ENCODE measurements at regions of chr5 and their contacts with region 1.

Region 1: GRCh38 chr5:177516604-177517568 is at the start of gene DDX41:
- DNase-seq: peak; percentile 99
- H3K4me3 Mint-ChIP-seq: peak within 1 kb of the TSS; percentile 91
- H3K27ac Mint-ChIP-seq: peak within 1 kb of the TSS; percentile 92
- H3K4me1 Mint-ChIP-seq: peaks cover 32% of the 10 kb centered on the region
- H3K27me3 Mint-ChIP-seq: no peaks in the 10 kb centered on the region
- total RNA-seq, gene DDX41: 157 and 172 TPM in 2 replicates

Region 2: GRCh38 chr5:177133091-177133852 is 383.6 kb before region 1 on chr5 and contains the start of gene NSD1:
- intact Hi-C with region 1: loop called (anchors 5 kb)
- DNase-seq: peak; percentile 97
- H3K4me3 Mint-ChIP-seq: peak within 1 kb of the TSS; percentile 95
- H3K27ac Mint-ChIP-seq: peak within 1 kb of the TSS; percentile 92
- H3K4me1 Mint-ChIP-seq: peaks cover 46% of the 10 kb centered on the region
- H3K27me3 Mint-ChIP-seq: no peaks in the 10 kb centered on the region
- total RNA-seq, gene NSD1: 103 and 108 TPM in 2 replicates

Region 3: DNA sequence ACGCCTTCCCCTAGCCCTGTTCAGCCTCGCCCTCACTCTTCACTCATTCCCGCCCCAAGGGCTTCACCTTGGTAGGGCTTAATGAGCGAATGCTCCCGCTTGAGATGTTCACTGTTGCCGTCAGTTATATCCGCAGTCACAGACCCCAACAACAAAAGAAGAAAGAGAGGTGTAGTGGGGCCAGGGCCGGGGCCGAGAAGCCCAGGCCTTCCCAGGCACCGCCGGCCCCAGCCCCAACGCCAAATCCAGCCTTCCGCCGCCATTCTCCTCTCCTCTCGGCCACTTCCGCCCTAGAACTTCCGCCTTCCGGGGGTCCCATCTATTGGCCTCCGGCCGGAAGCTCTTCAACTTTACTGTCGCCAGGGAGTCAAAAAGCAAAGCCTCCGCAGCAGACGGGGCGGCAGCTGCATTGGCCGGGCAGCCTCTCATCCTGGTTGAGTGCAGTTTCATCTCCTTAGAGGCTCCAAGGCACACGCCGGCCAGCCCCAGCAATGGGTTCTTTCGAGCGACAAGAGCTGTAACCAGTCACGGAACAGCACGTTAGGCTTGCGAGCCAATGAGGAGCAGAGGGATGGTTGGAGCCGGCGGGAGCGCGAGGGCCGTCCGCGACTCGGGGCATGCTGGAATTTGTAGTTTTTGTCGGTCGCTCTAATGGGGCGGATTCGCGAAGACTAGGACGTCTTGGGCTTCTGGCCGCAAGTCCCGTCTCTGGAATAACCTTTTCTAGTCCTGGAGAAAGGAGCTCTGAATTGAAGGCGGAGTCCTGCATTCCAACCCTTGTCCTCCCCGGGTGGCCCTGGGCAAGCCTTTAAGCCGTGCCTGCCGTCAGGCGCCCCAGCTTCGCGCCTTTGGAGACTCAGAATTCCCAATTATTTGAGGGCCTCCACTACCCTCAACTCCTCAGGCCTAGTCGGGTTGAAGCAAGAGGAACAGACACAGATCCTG is 165.2 kb before region 1 on chr5 and contains the start of gene LMAN2:
- intact Hi-C with region 1: loop called (anchors 1 kb)
- DNase-seq: peak; percentile 97
- H3K4me3 Mint-ChIP-seq: peak within 1 kb of the TSS; percentile 90
- H3K27ac Mint-ChIP-seq: peak within 1 kb of the TSS; percentile 100
- H3K4me1 Mint-ChIP-seq: peaks cover 48% of the 10 kb centered on the region
- H3K27me3 Mint-ChIP-seq: no peaks in the 10 kb centered on the region
- total RNA-seq, gene LMAN2: 105 and 108 TPM in 2 replicates

Region 4: GRCh38 chr5:177554474-177555111 is 37.7 kb after region 1 on chr5 and contains the start of gene FAM193B:
- intact Hi-C with region 1: loop called (anchors 5 kb)
- DNase-seq: peak; percentile 99
- H3K4me3 Mint-ChIP-seq: peak within 1 kb of the TSS; percentile 88
- H3K27ac Mint-ChIP-seq: peak within 1 kb of the TSS; percentile 79
- H3K4me1 Mint-ChIP-seq: peaks cover 31% of the 10 kb centered on the region
- H3K27me3 Mint-ChIP-seq: no peaks in the 10 kb centered on the region
- total RNA-seq, gene FAM193B: 71.2 and 85.5 TPM in 2 replicates

Region 5: GRCh38 chr5:177592010-177592834 is 75.3 kb after region 1 on chr5 and contains the start of gene TMED9:
- intact Hi-C with region 1: loop called (anchors 1 kb)
- DNase-seq: peak; percentile 98
- H3K4me3 Mint-ChIP-seq: peak within 1 kb of the TSS; percentile 97
- H3K27ac Mint-ChIP-seq: peak within 1 kb of the TSS; percentile 97
- H3K4me1 Mint-ChIP-seq: peaks cover 15% of the 10 kb centered on the region
- H3K27me3 Mint-ChIP-seq: peaks cover 24% of the 10 kb centered on the region
- total RNA-seq, gene TMED9: 147 and 156 TPM in 2 replicates

Region 6: DNA sequence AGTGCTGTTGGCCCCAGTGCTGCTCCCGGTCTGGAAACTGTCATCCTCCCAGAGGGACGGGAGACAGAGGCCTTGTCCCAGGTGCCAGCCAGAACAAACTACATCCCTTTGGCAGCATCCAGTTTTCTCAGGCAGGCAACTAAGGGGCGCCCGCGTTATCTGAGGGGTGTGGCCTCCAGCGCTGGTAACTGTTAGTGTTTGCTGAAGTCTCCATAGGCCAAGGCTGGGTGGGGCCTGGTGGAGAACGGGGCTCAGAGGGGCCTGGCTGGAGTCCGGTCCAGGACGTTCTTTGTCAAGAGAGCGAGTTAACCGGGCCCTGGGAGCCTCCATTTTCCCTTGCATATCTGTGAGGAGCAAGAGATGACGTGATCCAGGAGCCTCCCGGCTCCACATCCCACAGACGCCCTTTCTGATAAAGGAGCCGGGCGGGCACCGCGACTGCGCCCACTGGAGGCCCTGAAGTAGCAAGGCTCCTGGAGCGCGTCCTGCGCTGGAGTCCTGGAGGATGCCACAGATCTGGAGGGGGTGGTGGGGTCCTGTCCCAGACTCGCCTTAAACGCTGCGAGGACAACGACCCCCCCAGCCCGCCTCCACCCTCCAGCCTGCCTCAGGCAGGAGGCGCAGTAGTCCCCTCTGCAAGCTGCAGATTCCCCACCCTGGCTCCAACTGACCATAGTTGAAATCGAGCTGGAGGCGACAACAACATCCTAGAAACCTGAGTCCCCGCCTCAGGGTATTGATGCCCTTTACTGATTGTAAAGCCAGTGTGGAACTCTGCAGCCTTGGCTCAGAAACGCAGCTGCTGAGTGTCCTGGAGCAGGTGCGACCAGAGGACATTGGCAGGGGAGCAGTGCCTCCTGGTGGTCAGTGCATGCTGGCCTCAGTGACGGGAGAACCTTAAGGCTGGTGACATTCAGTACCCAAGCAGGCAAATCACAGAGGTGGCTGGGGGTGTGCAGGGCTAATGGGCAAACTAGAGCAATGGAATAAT is 1322.1 kb after region 1 on chr5:
- intact Hi-C with region 1: no loop called
- DNase-seq: peak; percentile 80
- H3K4me3 Mint-ChIP-seq: no peak overlapping the region
- H3K27ac Mint-ChIP-seq: no peak overlapping the region
- H3K4me1 Mint-ChIP-seq: no peaks in the 10 kb centered on the region
- H3K27me3 Mint-ChIP-seq: no peaks in the 10 kb centered on the region